Panc1 (cell line): ENCODE measurements at regions of chr1 and their contacts with region 1.

Region 1: GRCh38 chr1:205896320-205896719 is 46.4 kb upstream of the PM20D1 start:
- DNase-seq: no peak
- ATAC-seq: no peak
- H3K4me3 ChIP-seq: no peak overlapping the region
- H3K27ac ChIP-seq: no peak overlapping the region
- H3K4me1 ChIP-seq: no peaks in the 10 kb centered on the region
- H3K27me3 ChIP-seq: no peaks in the 10 kb centered on the region
- CTCF ChIP-seq: no peak

Region 2: DNA sequence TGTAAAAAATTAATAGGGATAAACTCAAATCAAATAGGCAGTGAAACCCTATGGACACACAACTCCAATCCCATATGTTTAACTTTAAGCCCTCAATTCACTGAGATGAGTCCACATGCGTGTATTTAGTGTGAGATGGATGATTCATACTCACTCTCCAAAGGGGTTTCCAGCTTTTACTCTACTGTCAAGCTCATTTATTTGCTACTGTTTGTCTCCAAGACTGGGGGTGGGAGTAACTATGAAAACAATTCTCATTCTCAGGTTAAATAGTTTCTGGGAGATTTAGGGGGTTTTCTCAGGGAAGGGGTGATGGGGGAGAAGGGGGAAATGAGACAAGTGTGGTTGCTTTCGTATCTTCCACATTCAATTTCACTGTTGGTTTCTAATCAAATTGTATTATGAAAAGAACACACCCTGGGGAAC is 123.7 kb before region 1 on chr1:
- CTCF ChIA-PET with region 1: interaction called, 11 read pairs
- POLR2A ChIA-PET with region 1: no interaction called
- in situ Hi-C with region 1: no loop called
- intact Hi-C with region 1: no loop called
- DNase-seq: no peak
- ATAC-seq: no peak
- H3K4me3 ChIP-seq: no peak overlapping the region
- H3K27ac ChIP-seq: no peak overlapping the region
- H3K4me1 ChIP-seq: peaks cover 9% of the 10 kb centered on the region
- H3K27me3 ChIP-seq: no peaks in the 10 kb centered on the region
- CTCF ChIP-seq: no peak

Region 3: GRCh38 chr1:205878026-205878425 is 18.3 kb before region 1 on chr1:
- CTCF ChIA-PET with region 1: no interaction called
- POLR2A ChIA-PET with region 1: no interaction called
- in situ Hi-C with region 1: no loop called
- intact Hi-C with region 1: no loop called
- DNase-seq: no peak
- ATAC-seq: no peak
- H3K4me3 ChIP-seq: no peak overlapping the region
- H3K27ac ChIP-seq: no peak overlapping the region
- H3K4me1 ChIP-seq: no peaks in the 10 kb centered on the region
- H3K27me3 ChIP-seq: peaks cover 2% of the 10 kb centered on the region; the same call in 1 of the 2 replicates
- CTCF ChIP-seq: no peak

Region 4: GRCh38 chr1:205920159-205920558 is 23.8 kb after region 1 on chr1:
- CTCF ChIA-PET with region 1: no interaction called
- POLR2A ChIA-PET with region 1: no interaction called
- in situ Hi-C with region 1: no loop called
- intact Hi-C with region 1: no loop called
- DNase-seq: no peak
- ATAC-seq: no peak
- H3K4me3 ChIP-seq: no peak overlapping the region
- H3K27ac ChIP-seq: no peak overlapping the region
- H3K4me1 ChIP-seq: peaks cover 5% of the 10 kb centered on the region; the same call in 1 of the 2 replicates
- H3K27me3 ChIP-seq: no peaks in the 10 kb centered on the region
- CTCF ChIP-seq: no peak